IMR-90 (cell line): ENCODE measurements at regions of chr11 and their contacts with region 1.

Region 1: GRCh38 chr11:43895601-43896000 is 15.0 kb downstream of the ALKBH3 start:
- DNase-seq: no peak
- ATAC-seq: no peak
- H3K4me3 ChIP-seq: no peak overlapping the region
- H3K27ac ChIP-seq: no peak overlapping the region
- H3K4me1 ChIP-seq: no peaks in the 10 kb centered on the region
- H3K27me3 ChIP-seq: no peaks in the 10 kb centered on the region
- CTCF ChIP-seq: no peak
- POLR2A ChIP-seq: no peak
- RAD21 ChIP-seq: no peak

Region 2: DNA sequence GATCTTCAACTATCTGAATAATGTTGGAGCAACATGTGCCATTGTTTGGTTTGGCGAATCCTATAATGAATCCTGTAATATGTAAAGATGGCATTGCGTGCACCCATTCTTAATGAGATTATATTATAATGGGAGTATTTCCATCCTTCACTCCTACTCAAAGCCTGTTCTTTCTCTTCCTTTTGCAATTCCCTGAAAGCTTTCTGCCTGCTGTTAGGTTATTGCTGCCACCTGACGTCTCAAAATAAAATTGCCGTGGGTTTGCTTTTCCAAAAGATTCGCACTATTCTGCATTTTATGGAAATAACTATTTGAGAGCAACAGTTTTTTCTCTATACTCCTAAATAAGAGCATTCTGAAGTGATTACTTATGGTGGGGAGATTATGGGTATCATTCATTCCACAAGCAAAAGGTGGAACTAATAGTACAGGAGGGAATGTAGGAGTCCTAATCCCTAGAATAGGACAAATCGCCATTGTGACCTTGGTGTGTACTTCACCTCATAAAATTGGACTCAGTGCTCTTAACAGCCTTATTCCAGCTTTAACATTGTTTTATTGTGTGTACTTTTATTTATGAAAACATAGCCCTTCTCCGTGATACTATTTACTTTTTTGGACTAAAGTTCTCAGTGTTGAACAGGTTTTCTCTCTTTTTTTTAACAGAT is 84.5 kb before region 1 on chr11:
- CTCF ChIA-PET with region 1: no interaction called
- POLR2A ChIA-PET with region 1: no interaction called
- dilution Hi-C with region 1: no loop called
- in situ Hi-C with region 1: no loop called
- intact Hi-C with region 1: no loop called
- DNase-seq: no peak
- ATAC-seq: no peak
- H3K4me3 ChIP-seq: no peak overlapping the region
- H3K27ac ChIP-seq: no peak overlapping the region
- H3K4me1 ChIP-seq: no peaks in the 10 kb centered on the region
- H3K27me3 ChIP-seq: no peaks in the 10 kb centered on the region
- CTCF ChIP-seq: peak; percentile 42
- POLR2A ChIP-seq: no peak
- RAD21 ChIP-seq: peak; percentile 52

Region 3: GRCh38 chr11:43944761-43945311 is 49.2 kb after region 1 on chr11:
- CTCF ChIA-PET with region 1: interaction called, 4 read pairs
- POLR2A ChIA-PET with region 1: no interaction called
- dilution Hi-C with region 1: no loop called
- in situ Hi-C with region 1: loop called (anchors 5 kb)
- intact Hi-C with region 1: loop called (anchors 1 kb)
- DNase-seq: peak; percentile 27
- ATAC-seq: peak; percentile 29; the same call in 1 of the 2 replicates
- H3K4me3 ChIP-seq: no peak overlapping the region
- H3K27ac ChIP-seq: no peak overlapping the region
- H3K4me1 ChIP-seq: peaks cover 5% of the 10 kb centered on the region; the same call in 1 of the 2 replicates
- H3K27me3 ChIP-seq: peaks cover 61% of the 10 kb centered on the region
- CTCF ChIP-seq: peak; percentile 69
- POLR2A ChIP-seq: peak; percentile 70; the same call in 1 of the 2 replicates
- RAD21 ChIP-seq: peak; percentile 58

Region 4: DNA sequence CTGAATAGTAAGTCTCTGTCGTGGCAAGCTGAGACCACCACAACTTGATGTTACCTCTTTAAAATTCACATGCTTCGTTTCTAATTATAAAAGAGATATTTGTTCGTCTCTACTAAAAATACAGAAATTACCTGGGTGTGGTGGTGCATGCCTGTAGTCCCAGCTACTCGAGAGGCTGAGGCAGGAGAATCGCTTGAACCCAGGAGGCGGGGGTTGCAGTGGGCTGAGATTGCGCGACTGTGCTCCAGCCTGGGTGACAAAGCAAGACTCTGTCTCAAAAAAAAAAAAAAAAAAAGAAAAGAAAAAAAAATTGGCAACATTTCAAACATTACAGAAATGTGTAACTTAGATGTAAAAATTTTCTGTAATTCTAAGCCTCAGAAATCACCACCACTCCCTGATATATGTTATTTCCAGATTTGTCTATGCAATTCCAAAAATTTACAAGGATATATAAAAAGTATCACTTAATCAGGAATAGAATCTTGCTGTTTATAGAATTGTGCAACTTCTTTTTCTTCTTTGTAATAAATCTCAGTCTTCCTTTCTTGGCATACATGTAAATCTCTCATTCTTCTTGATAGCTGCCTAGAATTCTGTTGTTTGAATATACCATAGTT is 84.1 kb after region 1 on chr11:
- CTCF ChIA-PET with region 1: no interaction called
- POLR2A ChIA-PET with region 1: no interaction called
- dilution Hi-C with region 1: no loop called
- in situ Hi-C with region 1: no loop called
- intact Hi-C with region 1: no loop called
- DNase-seq: no peak
- ATAC-seq: no peak
- H3K4me3 ChIP-seq: no peak overlapping the region
- H3K27ac ChIP-seq: no peak overlapping the region
- H3K4me1 ChIP-seq: no peaks in the 10 kb centered on the region
- H3K27me3 ChIP-seq: peaks cover 21% of the 10 kb centered on the region
- CTCF ChIP-seq: no peak
- POLR2A ChIP-seq: no peak
- RAD21 ChIP-seq: no peak